ENCODE measurements at regions of chr18 and their contacts with region 1.

Region 1: GRCh38 chr18:7749510-7749981 is 182.4 kb downstream of the PTPRM start:
- DNase-seq: no peak
- ATAC-seq: peak; percentile 58

Region 2: DNA sequence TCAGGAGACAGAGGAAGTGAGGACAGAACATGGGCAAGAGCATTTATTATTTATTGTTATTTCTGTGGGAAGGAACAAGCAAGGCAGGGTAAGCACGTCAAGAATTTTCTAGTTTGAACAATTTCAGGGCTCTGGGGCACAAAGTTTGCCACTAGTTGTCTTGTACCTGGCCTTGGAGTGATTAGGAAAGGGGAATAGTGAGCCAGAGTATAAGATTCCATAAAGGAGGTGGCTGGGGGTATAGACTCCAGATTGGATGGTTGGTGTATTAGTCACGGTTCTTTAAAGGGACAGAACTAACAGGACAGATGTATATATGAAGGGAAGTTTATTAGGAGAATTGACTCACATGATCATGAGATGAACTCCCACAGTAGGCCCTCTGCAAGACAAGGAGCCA is 214.2 kb before region 1 on chr18:
- intact Hi-C with region 1: no loop called
- DNase-seq: no peak
- ATAC-seq: no peak

Region 3: GRCh38 chr18:7575157-7576028 is 174.2 kb before region 1 on chr18:
- intact Hi-C with region 1: loop called (anchors 10 kb)
- DNase-seq: no peak
- ATAC-seq: no peak

Region 4: DNA sequence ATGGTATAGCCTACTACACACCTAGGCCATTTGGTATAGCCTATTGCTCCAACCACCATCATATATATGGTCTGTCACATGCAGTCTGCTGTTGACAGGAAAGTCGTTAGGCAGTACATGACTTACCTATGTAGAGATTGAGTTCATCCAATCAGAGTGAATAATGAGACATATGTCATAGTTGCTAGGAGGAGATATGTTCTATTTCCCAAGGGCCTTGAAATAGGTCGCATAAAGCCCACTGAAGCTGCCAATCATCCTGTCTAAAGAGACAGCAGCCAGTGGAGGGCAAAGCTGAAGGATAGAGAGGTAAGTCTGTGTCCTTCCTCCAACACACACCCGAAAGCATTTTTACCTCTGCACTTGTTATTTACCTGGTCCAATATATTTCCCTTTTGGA is 80.9 kb after region 1 on chr18:
- intact Hi-C with region 1: no loop called
- DNase-seq: no peak
- ATAC-seq: no peak

Region 5: DNA sequence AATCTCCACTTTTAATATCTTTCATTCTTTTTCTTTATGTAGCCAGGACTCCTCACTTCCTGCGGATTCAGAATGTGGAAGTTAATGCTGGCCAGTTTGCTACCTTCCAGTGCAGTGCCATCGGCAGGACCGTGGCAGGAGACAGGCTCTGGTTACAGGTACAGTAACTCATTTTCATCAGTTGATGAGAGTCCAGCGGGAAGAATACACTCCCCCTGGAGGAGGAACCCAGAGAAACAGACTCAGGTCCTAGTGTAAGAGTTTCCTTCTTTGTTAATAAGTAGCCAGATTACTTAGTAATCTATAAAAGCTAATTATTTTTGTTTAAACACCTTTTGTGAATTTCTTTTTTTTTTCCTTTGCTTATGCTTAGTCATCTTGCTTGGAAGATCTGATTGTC is 177.0 kb after region 1 on chr18:
- intact Hi-C with region 1: no loop called
- DNase-seq: no peak
- ATAC-seq: no peak

Region 6: DNA sequence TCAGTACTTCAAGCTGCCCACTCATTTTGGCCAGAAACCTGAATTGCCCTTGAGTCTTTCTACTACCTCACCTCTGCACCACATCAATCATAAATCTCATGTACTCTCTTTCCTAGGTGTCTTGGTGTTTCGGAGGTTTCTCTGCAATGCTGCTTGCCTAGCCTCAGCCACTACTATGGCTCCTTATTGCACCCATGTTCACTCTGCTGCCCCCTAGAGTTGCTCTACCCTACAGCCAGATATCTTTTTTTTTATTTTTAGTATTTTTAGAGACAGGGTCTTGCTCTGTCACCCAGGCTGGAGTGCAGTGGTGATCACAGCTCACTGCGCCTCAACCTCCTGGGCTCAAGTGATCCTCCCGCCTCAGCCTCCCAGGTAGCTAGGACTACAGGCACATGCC is 230.6 kb after region 1 on chr18:
- intact Hi-C with region 1: no loop called
- DNase-seq: no peak
- ATAC-seq: no peak

Measured in Right ventricle myocardium superior (tissue), 1 donor.